CD8-positive, alpha-beta T cell (primary cell): ENCODE measurements at regions of chr4 and their contacts with region 1.

Region 1: DNA sequence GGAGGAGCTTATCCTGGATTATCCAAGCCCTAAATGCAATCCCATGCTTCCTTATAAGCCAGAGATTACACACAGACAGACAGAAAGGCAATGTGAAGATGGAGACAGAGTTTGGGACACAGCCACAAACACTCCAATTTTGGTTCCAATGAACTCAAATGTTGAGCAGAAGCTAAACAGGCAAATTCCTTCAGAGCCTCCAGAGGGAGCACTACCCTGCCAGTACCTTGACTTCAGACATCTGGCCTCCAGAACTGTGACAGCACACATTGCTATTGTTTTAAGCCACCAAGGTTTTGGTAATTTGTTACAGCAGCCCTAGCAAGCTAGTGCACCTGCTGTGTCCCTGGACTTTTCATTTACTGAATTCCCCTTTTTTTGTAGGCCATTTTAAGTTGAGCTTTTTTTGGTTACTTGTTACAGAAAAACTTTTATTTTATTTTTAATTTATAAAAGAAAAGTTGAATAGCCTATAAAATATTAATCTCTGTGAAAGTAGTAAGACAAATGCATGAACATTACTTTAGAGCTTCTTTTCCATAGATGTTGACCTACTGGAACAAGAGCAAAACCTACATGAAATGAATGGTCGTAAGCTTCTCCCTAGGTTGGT is 33.4 kb upstream of the SRD5A3 start:
- DNase-seq: peak in 6 of 9 experiments; percentile 5 to 64 (median 33)
- ATAC-seq: peak; percentile 54
- H3K4me3 ChIP-seq: no peak overlapping the region
- H3K4me3 Mint-ChIP-seq: no peak overlapping the region
- H3K27ac ChIP-seq: no peak overlapping the region
- H3K27ac Mint-ChIP-seq: no peak overlapping the region
- H3K4me1 ChIP-seq: no peaks in the 10 kb centered on the region
- H3K4me1 Mint-ChIP-seq: no peaks in the 10 kb centered on the region
- H3K27me3 ChIP-seq: no peaks in the 10 kb centered on the region
- H3K27me3 Mint-ChIP-seq: peaks cover 3% of the 10 kb centered on the region
- CTCF ChIP-seq: peak; percentile 63

Region 2: GRCh38 chr4:55278316-55278715 is 34.3 kb before region 1 on chr4:
- CTCF ChIA-PET with region 1: no interaction called
- POLR2A ChIA-PET with region 1: no interaction called
- intact Hi-C with region 1: no loop called
- DNase-seq: no peak
- ATAC-seq: no peak
- H3K4me3 ChIP-seq: no peak overlapping the region
- H3K4me3 Mint-ChIP-seq: no peak overlapping the region
- H3K27ac ChIP-seq: no peak overlapping the region
- H3K27ac Mint-ChIP-seq: no peak overlapping the region
- H3K4me1 ChIP-seq: no peaks in the 10 kb centered on the region
- H3K4me1 Mint-ChIP-seq: no peaks in the 10 kb centered on the region
- H3K27me3 ChIP-seq: no peaks in the 10 kb centered on the region
- H3K27me3 Mint-ChIP-seq: peaks cover 12% of the 10 kb centered on the region
- CTCF ChIP-seq: no peak

Region 3: DNA sequence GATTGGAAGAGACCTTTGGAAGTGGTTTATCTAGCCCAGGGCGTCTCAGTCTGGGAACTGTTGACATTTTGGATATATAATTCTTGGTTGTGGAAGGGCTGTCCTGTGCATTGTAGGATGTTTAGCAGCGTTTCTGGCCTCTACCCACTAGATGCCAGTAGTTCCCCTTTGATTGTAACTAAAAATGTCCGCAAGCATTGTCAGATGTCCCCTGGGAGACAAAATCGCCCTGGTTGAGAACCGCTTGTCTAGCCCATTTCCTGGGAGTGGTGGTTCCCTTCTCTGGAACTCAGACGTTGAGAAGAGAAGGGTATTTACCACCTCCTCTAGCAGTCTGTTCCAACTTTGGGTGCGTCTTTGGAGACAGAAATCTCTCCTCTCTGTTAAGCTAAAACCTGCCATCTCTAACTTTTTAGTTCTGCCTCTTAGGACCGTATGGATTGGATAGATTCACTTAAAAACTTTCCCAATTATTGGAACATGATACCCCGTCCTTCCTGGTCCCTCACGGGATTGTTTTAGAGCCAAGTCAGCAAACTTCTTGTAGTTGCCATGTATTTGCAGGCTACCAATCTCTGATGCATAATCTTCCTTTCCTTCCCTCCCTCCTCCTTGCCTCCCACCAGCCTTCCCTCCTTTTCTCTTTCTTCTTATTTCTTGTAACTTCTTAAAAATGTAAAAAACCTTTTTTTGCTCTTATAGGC is 97.0 kb after region 1 on chr4:
- CTCF ChIA-PET with region 1: no interaction called
- POLR2A ChIA-PET with region 1: no interaction called
- intact Hi-C with region 1: no loop called
- DNase-seq: peak in 2 of 9 experiments; percentile 15 to 31
- ATAC-seq: no peak
- H3K4me3 ChIP-seq: no peak overlapping the region
- H3K4me3 Mint-ChIP-seq: no peak overlapping the region
- H3K27ac ChIP-seq: no peak overlapping the region
- H3K27ac Mint-ChIP-seq: no peak overlapping the region
- H3K4me1 ChIP-seq: peaks cover 3% of the 10 kb centered on the region
- H3K4me1 Mint-ChIP-seq: peaks cover 46% of the 10 kb centered on the region
- H3K27me3 ChIP-seq: no peaks in the 10 kb centered on the region
- H3K27me3 Mint-ChIP-seq: no peaks in the 10 kb centered on the region
- CTCF ChIP-seq: no peak

Region 4: DNA sequence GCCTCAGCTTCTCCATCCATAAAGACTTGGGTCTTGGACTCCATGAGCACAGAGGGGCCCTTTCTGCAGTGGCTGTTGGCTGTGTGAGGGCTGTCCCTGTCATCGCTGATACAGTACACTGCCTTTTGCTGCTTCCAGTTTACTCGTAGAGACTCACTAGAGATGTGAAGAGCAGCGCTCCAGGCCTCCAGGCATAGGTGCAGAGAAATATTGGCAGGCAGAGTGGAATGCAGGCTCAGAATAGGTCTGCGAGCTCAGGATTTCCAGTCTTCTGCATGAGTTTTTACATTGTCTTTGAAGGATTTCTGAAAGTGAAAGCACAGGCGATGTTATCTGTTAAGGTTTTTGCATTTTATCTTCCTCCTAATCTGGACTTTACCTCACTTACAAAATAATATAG is 977.3 kb after region 1 on chr4:
- CTCF ChIA-PET with region 1: no interaction called
- POLR2A ChIA-PET with region 1: no interaction called
- intact Hi-C with region 1: loop called in 1 of 2 experiments (anchors 5 kb)
- DNase-seq: no peak
- ATAC-seq: no peak
- H3K4me3 ChIP-seq: no peak overlapping the region
- H3K4me3 Mint-ChIP-seq: peak overlapping the region; percentile 33
- H3K27ac ChIP-seq: no peak overlapping the region
- H3K27ac Mint-ChIP-seq: no peak overlapping the region
- H3K4me1 ChIP-seq: peaks cover 4% of the 10 kb centered on the region
- H3K4me1 Mint-ChIP-seq: peaks cover 10% of the 10 kb centered on the region
- H3K27me3 ChIP-seq: no peaks in the 10 kb centered on the region
- H3K27me3 Mint-ChIP-seq: peaks cover 2% of the 10 kb centered on the region
- CTCF ChIP-seq: no peak